ENCODE measurements at regions of chr1 and their contacts with region 1.

Region 1: DNA sequence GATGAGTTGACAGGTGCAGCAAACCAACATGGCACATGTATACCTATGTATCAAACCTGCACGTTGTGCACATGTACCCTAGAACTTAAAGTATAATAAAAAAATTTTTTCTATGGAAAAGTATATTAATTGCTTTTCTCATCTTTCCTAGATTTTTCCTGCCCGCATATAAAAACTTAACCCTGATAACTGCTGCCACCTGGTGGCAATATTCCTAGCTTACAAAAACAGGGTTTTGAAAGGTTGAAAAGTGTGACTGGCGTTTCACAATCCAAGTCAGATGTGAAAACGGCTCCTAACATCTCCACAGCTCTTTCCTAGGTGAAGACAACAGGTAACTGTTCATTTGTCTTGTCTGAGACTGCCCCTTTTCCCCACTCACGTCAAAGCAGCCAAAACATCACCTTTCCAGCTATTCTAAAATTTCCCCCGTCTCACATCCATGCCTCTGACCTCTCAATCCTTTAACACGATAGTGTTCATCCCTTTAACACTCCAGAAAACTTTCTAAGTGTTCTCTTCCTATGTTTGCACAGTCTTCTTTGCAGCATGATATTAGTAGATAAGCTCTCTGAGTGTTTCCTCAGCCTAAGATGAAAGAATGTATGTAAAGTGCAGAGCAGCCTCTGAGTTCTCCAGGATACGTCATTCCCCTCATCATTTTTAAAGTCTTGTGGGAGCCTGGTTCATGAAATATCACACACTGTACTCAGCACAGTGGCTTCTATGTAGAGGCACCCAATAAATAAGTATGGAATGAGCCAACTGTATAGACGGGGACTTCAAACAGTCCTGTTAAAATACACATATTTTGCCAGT is 27.5 kb downstream of the OVGP1 start:
- DNase-seq: peak; percentile 58
- H3K4me3 Mint-ChIP-seq: no peak overlapping the region
- H3K27ac Mint-ChIP-seq: no peak overlapping the region
- H3K4me1 Mint-ChIP-seq: peaks cover 10% of the 10 kb centered on the region
- H3K27me3 Mint-ChIP-seq: peaks cover 36% of the 10 kb centered on the region

Region 2: DNA sequence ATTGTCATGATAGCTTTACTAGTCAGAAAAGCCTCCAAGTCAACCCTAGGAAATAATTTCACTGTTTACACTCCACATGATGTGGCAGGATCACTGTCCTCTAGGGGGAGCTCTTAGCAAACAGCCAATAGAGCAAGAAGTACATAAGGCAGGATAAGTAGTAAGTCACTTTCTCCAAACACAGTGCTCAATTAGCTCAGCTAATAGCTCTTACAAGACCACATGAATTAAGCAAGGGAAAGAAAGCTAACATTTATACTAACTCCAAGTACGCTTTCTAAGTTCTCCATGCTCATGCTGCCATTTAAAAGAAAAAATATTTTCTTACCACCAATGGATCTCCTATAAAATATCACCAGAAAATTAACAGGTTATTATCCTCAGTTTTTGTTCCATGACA is 369.4 kb before region 1 on chr1:
- CTCF ChIA-PET with region 1: interaction called, 13 read pairs
- DNase-seq: peak; percentile 71
- H3K4me3 Mint-ChIP-seq: no peak overlapping the region
- H3K27ac Mint-ChIP-seq: no peak overlapping the region
- H3K4me1 Mint-ChIP-seq: no peaks in the 10 kb centered on the region
- H3K27me3 Mint-ChIP-seq: peaks cover 23% of the 10 kb centered on the region

Region 3: DNA sequence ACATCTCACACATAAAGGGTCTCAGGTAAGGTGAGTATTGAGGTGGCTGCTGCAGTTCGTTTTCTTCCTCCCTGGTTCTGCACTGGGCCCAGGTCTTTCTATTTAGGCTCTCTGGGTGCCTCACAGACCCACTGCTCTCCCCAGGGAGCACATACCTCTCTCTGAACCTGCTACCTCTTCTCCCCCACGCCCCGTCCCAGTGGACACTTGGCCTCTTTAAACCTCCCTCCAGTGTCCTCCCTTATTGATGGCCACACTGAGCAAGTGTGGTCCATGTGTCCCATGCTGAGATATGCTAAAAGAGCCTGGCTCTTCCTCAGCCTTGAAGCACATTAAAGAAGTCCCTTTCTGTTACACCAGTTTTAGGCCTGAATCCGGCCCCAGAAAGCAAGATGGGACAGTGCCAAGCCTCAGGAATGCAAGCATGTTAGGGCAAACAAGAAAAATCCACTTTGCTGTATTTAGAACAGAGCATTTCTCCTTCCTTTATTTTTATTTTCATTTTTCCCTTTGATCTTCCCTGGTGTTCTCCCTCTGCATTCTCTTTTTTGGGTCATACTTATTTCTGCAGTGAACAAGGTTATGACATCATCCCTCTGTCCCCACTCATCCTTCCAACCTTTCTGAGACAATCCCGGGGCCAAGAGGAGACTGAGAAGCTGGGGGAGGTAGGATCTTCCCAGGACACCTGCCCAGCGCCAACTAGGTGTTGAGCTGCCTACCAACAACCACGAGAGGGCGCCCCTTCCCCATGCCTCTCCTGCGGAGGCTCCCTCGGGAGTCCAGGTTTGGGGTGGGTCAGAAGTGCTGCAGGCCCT is 177.5 kb before region 1 on chr1:
- CTCF ChIA-PET with region 1: interaction called, 34 read pairs
- DNase-seq: peak; percentile 87
- H3K4me3 Mint-ChIP-seq: peak overlapping the region; percentile 71
- H3K27ac Mint-ChIP-seq: peak overlapping the region; percentile 98
- H3K4me1 Mint-ChIP-seq: peaks cover 96% of the 10 kb centered on the region
- H3K27me3 Mint-ChIP-seq: no peaks in the 10 kb centered on the region

Region 4: GRCh38 chr1:111412839-111413238 is 12.8 kb after region 1 on chr1:
- CTCF ChIA-PET with region 1: interaction called, 19 read pairs
- DNase-seq: no peak
- H3K4me3 Mint-ChIP-seq: no peak overlapping the region
- H3K27ac Mint-ChIP-seq: no peak overlapping the region
- H3K4me1 Mint-ChIP-seq: no peaks in the 10 kb centered on the region
- H3K27me3 Mint-ChIP-seq: no peaks in the 10 kb centered on the region

Region 5: DNA sequence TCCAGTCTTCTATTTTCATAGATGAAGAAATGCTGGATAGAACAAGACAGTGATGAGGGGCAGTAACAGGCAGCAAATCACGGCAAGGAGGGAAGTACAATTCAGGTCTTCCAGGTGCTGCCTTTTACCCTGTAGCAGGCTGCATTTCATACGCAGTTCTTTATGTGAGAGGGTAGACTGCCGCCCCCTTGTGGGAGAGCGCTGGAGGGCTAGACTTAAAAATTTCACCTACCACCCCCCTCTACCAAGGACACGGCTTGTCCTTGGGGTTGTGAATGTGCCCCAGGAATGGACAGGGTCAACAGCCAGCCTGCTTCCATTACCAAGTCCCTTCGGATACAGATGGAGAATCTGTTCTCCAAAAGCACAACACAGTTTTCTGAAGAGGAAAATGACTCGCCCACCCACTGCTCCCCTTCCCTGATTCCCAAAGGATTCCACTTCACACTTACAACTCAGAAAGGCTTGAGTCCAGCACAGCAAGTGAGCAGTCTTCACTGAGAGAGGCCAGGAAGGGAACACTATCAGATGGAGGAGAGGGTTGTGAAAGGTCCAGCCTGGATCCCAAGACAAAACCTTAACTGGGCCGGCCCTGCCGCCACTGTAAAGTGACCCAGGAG is 41.7 kb after region 1 on chr1:
- CTCF ChIA-PET with region 1: interaction called, 10 read pairs
- DNase-seq: peak; percentile 80
- H3K4me3 Mint-ChIP-seq: no peak overlapping the region
- H3K27ac Mint-ChIP-seq: peak overlapping the region; percentile 38
- H3K4me1 Mint-ChIP-seq: peaks cover 43% of the 10 kb centered on the region
- H3K27me3 Mint-ChIP-seq: no peaks in the 10 kb centered on the region